H1 (cell line): ENCODE measurements at regions of chr11 and their contacts with region 1.

Region 1: GRCh38 chr11:73325036-73325981 is 17.2 kb downstream of the ARHGEF17 start:
- DNase-seq: no peak
- H3K4me3 ChIP-seq: no peak overlapping the region
- H3K27ac ChIP-seq: no peak overlapping the region
- H3K4me1 ChIP-seq: peaks cover 15 to 28% (median 20%) of the 10 kb centered on the region in 4 experiments
- H3K27me3 ChIP-seq: peaks cover 0 to 16% (median 8%) of the 10 kb centered on the region in 4 experiments; a peak in 3 of 7 replicates
- CTCF ChIP-seq: no peak
- EP300 ChIP-seq: no peak
- POLR2A ChIP-seq: no peak
- RAD21 ChIP-seq: no peak

Region 2: GRCh38 chr11:73227588-73228211 is 97.6 kb before region 1 on chr11:
- CTCF ChIA-PET with region 1: no interaction called
- POLR2A ChIA-PET with region 1: no interaction called
- DNase-seq: peak in 1 of 2 experiments; percentile 87
- H3K4me3 ChIP-seq: peak overlapping the region in 1 of 4 experiments; percentile 25; a peak in 2 of 8 replicates
- H3K27ac ChIP-seq: no peak overlapping the region
- H3K4me1 ChIP-seq: peaks cover 3 to 15% (median 13%) of the 10 kb centered on the region in 4 experiments
- H3K27me3 ChIP-seq: no peaks in the 10 kb centered on the region; a peak in 2 of 7 replicates
- CTCF ChIP-seq: peak; percentile 50 to 67 (median 62)
- EP300 ChIP-seq: no peak
- POLR2A ChIP-seq: 0 out of 3 replicates have a peak, but pooled peaks of 1 of the 2 experiments have one; percentile 38
- RAD21 ChIP-seq: peak; percentile 32 to 51; a peak in 3 of 4 replicates

Region 3: GRCh38 chr11:73350908-73351636 is 25.8 kb after region 1 on chr11:
- CTCF ChIA-PET with region 1: interaction called, 36 read pairs
- POLR2A ChIA-PET with region 1: interaction called, 5 read pairs
- DNase-seq: peak in 1 of 2 experiments; percentile 63
- H3K4me3 ChIP-seq: no peak overlapping the region
- H3K27ac ChIP-seq: no peak overlapping the region
- H3K4me1 ChIP-seq: no peaks in the 10 kb centered on the region; a peak in 2 of 7 replicates
- H3K27me3 ChIP-seq: no peaks in the 10 kb centered on the region
- CTCF ChIP-seq: peak; percentile 82 to 88 (median 85)
- EP300 ChIP-seq: no peak
- POLR2A ChIP-seq: no peak
- RAD21 ChIP-seq: peak; percentile 65 to 74